ENCODE measurements at regions of chr1 and their contacts with region 1.

Region 1: DNA sequence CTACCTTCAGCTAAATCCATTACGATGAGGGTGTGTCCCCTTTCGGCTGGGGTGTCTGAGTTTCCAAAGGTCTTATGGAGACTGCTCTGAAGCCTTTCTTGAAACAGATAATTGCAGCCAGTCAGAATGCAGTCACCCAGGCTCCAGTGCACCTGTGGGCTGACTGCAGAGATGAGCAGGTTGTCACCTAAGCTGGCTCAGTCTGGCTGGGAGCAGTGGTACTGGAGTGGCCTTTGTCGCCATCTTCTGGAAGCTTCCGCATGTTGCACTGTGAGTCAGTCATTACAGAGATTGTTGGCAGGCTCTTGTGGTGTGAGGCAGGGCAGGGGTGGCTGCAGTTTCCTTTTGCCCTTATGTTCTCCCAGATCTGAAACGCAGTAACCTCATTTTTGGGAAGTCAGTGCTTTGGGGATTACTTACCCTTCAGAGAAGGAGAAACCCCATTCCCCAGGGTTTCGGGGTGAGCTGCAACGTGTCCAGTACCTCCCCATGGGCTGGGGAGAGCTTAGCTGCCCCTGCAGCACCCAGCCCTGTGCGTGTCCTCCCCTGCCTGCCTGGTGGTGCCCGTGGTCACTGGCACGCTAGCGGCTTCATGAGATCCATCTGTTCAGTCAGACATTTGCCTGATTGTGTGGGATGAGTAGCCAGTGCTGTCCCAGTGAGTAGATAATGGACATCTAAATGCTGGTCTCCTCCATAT is 48.0 kb downstream of the SMYD2 start:
- DNase-seq: peak; percentile 77
- H3K4me3 ChIP-seq: no peak overlapping the region
- H3K27ac ChIP-seq: no peak overlapping the region
- H3K4me1 ChIP-seq: peaks cover 9% of the 10 kb centered on the region
- H3K27me3 ChIP-seq: no peaks in the 10 kb centered on the region
- CTCF ChIP-seq: peak; percentile 84 to 92
- POLR2A ChIP-seq: no peak

Region 2: DNA sequence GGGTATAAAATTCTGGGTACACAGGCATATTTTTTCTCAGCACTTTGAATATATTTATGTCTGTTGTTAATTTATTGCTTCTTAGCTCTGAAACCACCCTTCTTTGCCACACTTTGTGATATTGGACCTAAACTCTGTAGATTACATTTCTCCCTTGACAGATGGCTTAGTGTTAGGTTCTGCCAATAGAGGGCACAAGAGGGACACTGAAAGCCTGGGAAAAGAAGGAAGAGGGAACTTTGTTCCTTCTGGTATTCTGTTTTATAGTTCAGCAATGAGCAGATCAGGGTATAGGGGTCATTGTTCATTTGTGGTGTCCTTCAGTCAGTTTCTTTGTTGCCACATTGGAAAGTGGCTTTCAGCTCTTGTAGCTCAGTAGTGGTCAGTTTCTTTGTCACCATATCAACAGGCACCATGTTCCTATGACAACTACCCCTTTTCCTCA is 764.7 kb before region 1 on chr1:
- CTCF ChIA-PET with region 1: interaction called, 7 read pairs
- POLR2A ChIA-PET with region 1: no interaction called
- dilution Hi-C with region 1: no loop called
- intact Hi-C with region 1: loop called (anchors 1 kb)
- DNase-seq: peak; percentile 51
- H3K4me3 ChIP-seq: no peak overlapping the region
- H3K27ac ChIP-seq: no peak overlapping the region
- H3K4me1 ChIP-seq: no peaks in the 10 kb centered on the region
- H3K27me3 ChIP-seq: no peaks in the 10 kb centered on the region
- CTCF ChIP-seq: peak; percentile 40 to 52
- POLR2A ChIP-seq: no peak

Region 3: DNA sequence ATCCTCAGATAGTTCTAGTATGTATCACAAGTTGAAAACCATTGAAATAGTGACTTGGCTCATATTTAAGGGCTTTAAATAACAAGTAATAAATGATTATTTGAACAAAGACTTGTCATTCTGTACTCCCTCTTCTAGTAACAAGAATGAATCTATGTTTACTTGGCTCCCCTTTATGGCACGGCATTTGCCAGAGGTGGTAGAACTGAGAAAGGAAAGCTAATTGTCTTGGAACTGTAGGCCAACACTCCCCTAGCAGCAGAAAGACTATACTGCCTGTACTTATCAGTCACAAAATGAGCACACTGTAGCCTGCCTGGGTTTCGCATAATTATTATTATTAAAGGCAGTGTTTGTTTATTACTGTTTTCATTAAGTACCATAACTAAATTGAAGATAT is 77.6 kb before region 1 on chr1:
- CTCF ChIA-PET with region 1: interaction called, 284 read pairs
- POLR2A ChIA-PET with region 1: no interaction called
- dilution Hi-C with region 1: no loop called
- intact Hi-C with region 1: no loop called
- DNase-seq: no peak
- H3K4me3 ChIP-seq: no peak overlapping the region
- H3K27ac ChIP-seq: no peak overlapping the region
- H3K4me1 ChIP-seq: peaks cover 3% of the 10 kb centered on the region
- H3K27me3 ChIP-seq: no peaks in the 10 kb centered on the region
- CTCF ChIP-seq: no peak
- POLR2A ChIP-seq: no peak

Region 4: DNA sequence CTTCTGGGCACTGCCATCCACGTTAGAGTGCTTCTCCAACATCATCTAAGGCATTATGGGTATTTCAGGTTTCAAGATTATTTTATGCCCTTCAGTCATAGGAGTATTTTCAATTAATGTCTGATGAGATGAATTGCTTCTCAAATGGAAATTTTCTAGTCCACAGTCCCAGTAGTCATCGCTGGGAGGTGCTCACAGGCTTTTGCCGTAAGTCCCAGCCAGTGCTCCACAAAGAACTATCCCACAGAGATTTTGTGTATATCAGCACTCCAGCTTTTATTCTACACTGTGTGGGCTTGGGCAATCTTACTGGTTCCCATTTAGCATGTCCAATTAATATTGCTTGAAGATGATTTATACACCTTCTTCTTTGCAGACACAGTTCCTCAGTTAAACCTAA is 13.0 kb after region 1 on chr1:
- CTCF ChIA-PET with region 1: interaction called, 19 read pairs
- POLR2A ChIA-PET with region 1: no interaction called
- dilution Hi-C with region 1: no loop called
- intact Hi-C with region 1: no loop called
- DNase-seq: no peak
- H3K4me3 ChIP-seq: no peak overlapping the region
- H3K27ac ChIP-seq: no peak overlapping the region
- H3K4me1 ChIP-seq: no peaks in the 10 kb centered on the region
- H3K27me3 ChIP-seq: no peaks in the 10 kb centered on the region
- CTCF ChIP-seq: no peak
- POLR2A ChIP-seq: no peak

Region 5: GRCh38 chr1:214439352-214440119 is 110.6 kb after region 1 on chr1:
- CTCF ChIA-PET with region 1: no interaction called
- POLR2A ChIA-PET with region 1: no interaction called
- dilution Hi-C with region 1: no loop called
- intact Hi-C with region 1: no loop called
- DNase-seq: peak; percentile 53
- H3K4me3 ChIP-seq: no peak overlapping the region
- H3K27ac ChIP-seq: no peak overlapping the region
- H3K4me1 ChIP-seq: peaks cover 29% of the 10 kb centered on the region
- H3K27me3 ChIP-seq: no peaks in the 10 kb centered on the region
- CTCF ChIP-seq: no peak
- POLR2A ChIP-seq: no peak

Region 6: DNA sequence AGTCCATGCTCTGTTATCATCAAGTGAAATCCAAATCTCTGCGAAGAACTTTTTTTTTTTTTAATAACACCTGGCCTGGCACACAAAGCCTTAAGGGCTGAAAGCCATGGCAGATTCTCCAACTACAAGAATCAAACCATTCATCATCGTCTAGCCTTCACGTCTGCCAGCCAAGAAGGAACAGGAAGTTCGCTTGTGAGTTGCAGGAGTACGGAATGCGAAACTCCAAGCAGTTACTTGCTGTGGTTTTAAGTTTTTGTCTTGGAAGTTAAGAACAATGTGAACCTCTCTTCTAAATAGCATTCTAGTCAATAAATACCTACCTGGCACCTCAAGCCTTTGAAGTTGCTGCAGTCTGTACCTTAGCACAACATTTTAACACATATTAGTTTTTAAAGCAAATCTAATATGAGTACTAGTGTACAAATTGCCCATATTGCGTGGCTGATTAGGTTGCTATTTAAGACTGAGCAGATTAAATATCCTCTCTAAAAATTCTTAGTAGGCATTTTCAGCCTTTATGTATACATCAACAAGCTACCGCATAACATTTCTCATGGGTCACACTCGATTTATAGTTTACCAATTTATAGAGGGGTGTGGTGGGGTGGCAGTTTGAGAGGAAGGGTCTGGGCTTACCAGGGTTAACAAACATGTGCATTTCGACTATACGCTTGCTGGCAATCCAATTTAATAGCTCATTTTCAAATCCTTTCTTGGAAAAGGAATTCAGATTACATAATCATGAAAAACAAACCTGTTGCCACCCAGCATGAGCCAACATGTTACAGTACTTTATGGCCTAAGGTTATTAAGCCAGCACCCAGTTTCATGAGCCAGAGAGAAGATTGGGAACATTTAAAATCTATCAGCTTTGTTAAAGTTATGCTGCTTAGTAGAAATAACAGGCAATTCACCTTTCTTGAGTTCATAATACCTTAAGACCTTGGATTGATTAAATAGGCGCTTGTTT is 244.8 kb after region 1 on chr1:
- CTCF ChIA-PET with region 1: interaction called, 15 read pairs
- POLR2A ChIA-PET with region 1: no interaction called
- dilution Hi-C with region 1: loop called (anchors 25 kb)
- intact Hi-C with region 1: no loop called
- DNase-seq: no peak
- H3K4me3 ChIP-seq: no peak overlapping the region
- H3K27ac ChIP-seq: no peak overlapping the region
- H3K4me1 ChIP-seq: peaks cover 23% of the 10 kb centered on the region
- H3K27me3 ChIP-seq: no peaks in the 10 kb centered on the region
- CTCF ChIP-seq: no peak
- POLR2A ChIP-seq: no peak

Region 7: GRCh38 chr1:214632091-214632490 is 303.2 kb after region 1 on chr1:
- CTCF ChIA-PET with region 1: interaction called, 205 read pairs
- POLR2A ChIA-PET with region 1: interaction called, 3 read pairs
- dilution Hi-C with region 1: no loop called
- intact Hi-C with region 1: loop called (anchors 1 kb)
- DNase-seq: no peak
- H3K4me3 ChIP-seq: no peak overlapping the region
- H3K27ac ChIP-seq: no peak overlapping the region
- H3K4me1 ChIP-seq: no peaks in the 10 kb centered on the region
- H3K27me3 ChIP-seq: no peaks in the 10 kb centered on the region
- CTCF ChIP-seq: no peak
- POLR2A ChIP-seq: no peak

Measured in endothelial cell of umbilical vein (primary cell).